AG04450 (cell line): ENCODE measurements at regions of chr4 and their contacts with region 1.

Region 1: GRCh38 chr4:47451657-47452056 is 11.8 kb downstream of the COMMD8 start:
- DNase-seq: peak; percentile 18
- H3K4me3 ChIP-seq: no peak overlapping the region
- H3K27ac ChIP-seq: no peak overlapping the region
- H3K27me3 ChIP-seq: no peaks in the 10 kb centered on the region
- CTCF ChIP-seq: no peak

Region 2: GRCh38 chr4:47337878-47338277 is 113.8 kb before region 1 on chr4:
- CTCF ChIA-PET with region 1: interaction called, 11 read pairs
- POLR2A ChIA-PET with region 1: no interaction called
- DNase-seq: no peak
- H3K4me3 ChIP-seq: no peak overlapping the region
- H3K27ac ChIP-seq: no peak overlapping the region
- H3K27me3 ChIP-seq: no peaks in the 10 kb centered on the region
- CTCF ChIP-seq: no peak